Mammary epithelial cell (primary cell): ENCODE measurements at regions of chr21 and their contacts with region 1.

Region 1: DNA sequence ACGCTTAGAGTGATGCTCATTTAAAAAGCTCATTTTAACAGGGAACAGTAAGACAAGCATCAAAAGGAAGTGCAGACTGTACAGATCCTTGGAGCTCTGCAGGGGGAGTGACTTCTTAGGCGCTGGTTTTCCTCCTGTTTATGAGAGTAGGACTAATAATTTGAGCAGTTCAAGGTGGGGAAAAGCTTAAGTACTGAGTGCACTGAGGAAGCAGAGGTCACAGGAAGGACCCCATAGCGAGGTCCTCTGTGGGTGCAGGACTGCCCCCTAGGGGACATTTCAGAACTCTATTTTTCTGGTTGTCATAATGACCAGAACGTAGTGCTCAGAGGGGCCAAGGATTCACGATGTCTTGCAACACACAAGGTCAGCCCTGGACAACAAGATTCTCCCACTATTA is 112.1 kb downstream of the HLCS start:
- DNase-seq: no peak
- H3K4me3 ChIP-seq: no peak overlapping the region
- H3K27ac ChIP-seq: no peak overlapping the region
- H3K4me1 ChIP-seq: no peaks in the 10 kb centered on the region
- H3K27me3 ChIP-seq: no peaks in the 10 kb centered on the region
- CTCF ChIP-seq: peak; percentile 45 to 57

Region 2: GRCh38 chr21:36773117-36773516 is 81.3 kb before region 1 on chr21:
- CTCF ChIA-PET with region 1: interaction called, 12 read pairs
- dilution Hi-C with region 1: no loop called
- in situ Hi-C with region 1: no loop called
- intact Hi-C with region 1: no loop called
- DNase-seq: peak; percentile 84
- H3K4me3 ChIP-seq: no peak overlapping the region
- H3K27ac ChIP-seq: no peak overlapping the region
- H3K4me1 ChIP-seq: peaks cover 5% of the 10 kb centered on the region
- H3K27me3 ChIP-seq: no peaks in the 10 kb centered on the region
- CTCF ChIP-seq: no peak

Region 3: GRCh38 chr21:36909901-36910561 is 55.6 kb after region 1 on chr21:
- CTCF ChIA-PET with region 1: no interaction called
- dilution Hi-C with region 1: no loop called
- in situ Hi-C with region 1: no loop called
- intact Hi-C with region 1: loop called (anchors 5 kb)
- DNase-seq: peak; percentile 93
- H3K4me3 ChIP-seq: no peak overlapping the region
- H3K27ac ChIP-seq: peak overlapping the region; percentile 91
- H3K4me1 ChIP-seq: peaks cover 21% of the 10 kb centered on the region
- H3K27me3 ChIP-seq: no peaks in the 10 kb centered on the region
- CTCF ChIP-seq: no peak